ENCODE measurements at regions of chr4 and their contacts with region 1.

Region 1: GRCh38 chr4:38889143-38889542 is 21.5 kb downstream of the FAM114A1 start:
- DNase-seq: no peak
- ATAC-seq: no peak
- H3K4me3 ChIP-seq: no peak overlapping the region
- H3K27ac ChIP-seq: no peak overlapping the region
- H3K4me1 ChIP-seq: no peaks in the 10 kb centered on the region; a peak in 1 of 5 replicates
- H3K27me3 ChIP-seq: no peaks in the 10 kb centered on the region
- CTCF ChIP-seq: no peak
- EP300 ChIP-seq: no peak
- POLR2A ChIP-seq: no peak
- RAD21 ChIP-seq: no peak

Region 2: GRCh38 chr4:38654273-38654672 is 234.9 kb before region 1 on chr4:
- CTCF ChIA-PET with region 1: no interaction called
- POLR2A ChIA-PET with region 1: no interaction called
- in situ Hi-C with region 1: no loop called
- intact Hi-C with region 1: no loop called
- DNase-seq: no peak
- ATAC-seq: peak; percentile 62
- H3K4me3 ChIP-seq: no peak overlapping the region
- H3K27ac ChIP-seq: no peak overlapping the region
- H3K4me1 ChIP-seq: peaks cover 0 to 4% of the 10 kb centered on the region in 2 experiments; a peak in 3 of 5 replicates
- H3K27me3 ChIP-seq: no peaks in the 10 kb centered on the region
- CTCF ChIP-seq: no peak
- EP300 ChIP-seq: no peak
- POLR2A ChIP-seq: no peak
- RAD21 ChIP-seq: no peak

Region 3: DNA sequence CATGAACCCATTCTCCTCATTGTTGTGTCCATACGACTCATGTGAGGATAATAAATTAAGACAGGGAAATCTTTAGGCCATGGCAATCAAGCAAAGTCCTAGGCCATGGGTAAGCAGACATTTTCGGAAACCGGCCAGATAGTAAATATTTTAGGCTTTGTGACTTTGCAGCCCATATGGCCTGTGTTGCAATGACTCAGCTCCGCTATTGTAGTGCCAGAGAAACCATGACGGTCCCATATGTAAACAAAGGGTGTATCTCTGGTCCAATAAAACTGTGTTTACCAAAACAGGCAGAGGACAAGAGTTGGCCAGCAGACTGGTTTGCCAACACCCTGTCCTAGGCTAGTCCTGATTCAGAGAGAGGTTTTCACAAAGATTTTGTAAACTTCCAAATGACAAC is 16.5 kb before region 1 on chr4:
- CTCF ChIA-PET with region 1: no interaction called
- POLR2A ChIA-PET with region 1: interaction called, 11 read pairs
- in situ Hi-C with region 1: no loop called
- intact Hi-C with region 1: no loop called
- DNase-seq: peak in 2 of 4 experiments; percentile 21 to 42
- ATAC-seq: peak; percentile 56
- H3K4me3 ChIP-seq: no peak overlapping the region
- H3K27ac ChIP-seq: peak overlapping the region; percentile 30; the same call in 2 of the 3 replicates
- H3K4me1 ChIP-seq: peaks cover 10 to 24% of the 10 kb centered on the region in 2 experiments; a peak in 4 of 5 replicates
- H3K27me3 ChIP-seq: no peaks in the 10 kb centered on the region
- CTCF ChIP-seq: no peak
- EP300 ChIP-seq: no peak
- POLR2A ChIP-seq: no peak
- RAD21 ChIP-seq: no peak

Region 4: GRCh38 chr4:39048311-39048710 is 159.2 kb after region 1 on chr4:
- CTCF ChIA-PET with region 1: no interaction called
- POLR2A ChIA-PET with region 1: no interaction called
- in situ Hi-C with region 1: no loop called
- intact Hi-C with region 1: no loop called
- DNase-seq: no peak
- ATAC-seq: no peak
- H3K4me3 ChIP-seq: no peak overlapping the region
- H3K27ac ChIP-seq: no peak overlapping the region
- H3K4me1 ChIP-seq: peaks cover 0 to 18% of the 10 kb centered on the region in 2 experiments; a peak in 4 of 5 replicates
- H3K27me3 ChIP-seq: no peaks in the 10 kb centered on the region
- CTCF ChIP-seq: no peak
- EP300 ChIP-seq: no peak
- POLR2A ChIP-seq: no peak
- RAD21 ChIP-seq: no peak

Region 5: DNA sequence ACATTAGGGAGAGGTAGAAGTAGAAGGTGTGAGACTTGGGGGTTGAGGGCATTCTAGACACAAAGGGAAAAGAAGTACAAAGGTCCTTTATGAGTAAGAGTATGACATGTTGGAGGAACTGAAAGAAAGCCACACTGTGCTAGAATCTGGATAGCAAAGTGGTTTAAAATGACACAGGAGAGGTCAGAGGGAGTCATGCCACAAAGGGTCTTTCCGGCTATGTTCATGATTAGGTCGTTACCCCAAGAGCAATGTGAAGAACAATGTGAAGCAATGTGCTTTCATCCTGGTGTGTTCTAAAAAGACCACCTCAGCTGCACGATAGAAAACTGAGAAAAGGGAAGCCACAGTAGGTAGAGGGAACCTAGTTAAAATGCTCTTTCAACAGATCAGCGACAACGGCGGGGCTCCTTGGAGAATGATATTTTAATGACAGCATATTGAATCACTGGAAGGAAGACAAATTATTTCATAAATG is 720.4 kb after region 1 on chr4:
- CTCF ChIA-PET with region 1: no interaction called
- POLR2A ChIA-PET with region 1: no interaction called
- in situ Hi-C with region 1: loop called (anchors 25 kb)
- intact Hi-C with region 1: no loop called
- DNase-seq: no peak
- ATAC-seq: no peak
- H3K4me3 ChIP-seq: no peak overlapping the region
- H3K27ac ChIP-seq: no peak overlapping the region
- H3K4me1 ChIP-seq: no peaks in the 10 kb centered on the region
- H3K27me3 ChIP-seq: no peaks in the 10 kb centered on the region
- CTCF ChIP-seq: no peak
- EP300 ChIP-seq: no peak
- POLR2A ChIP-seq: no peak
- RAD21 ChIP-seq: no peak